Panc1 (cell line): ENCODE measurements at regions of chr13 and their contacts with region 1.

Region 1: GRCh38 chr13:100382785-100383184 is 205.8 kb downstream of the GGACT start:
- DNase-seq: no peak
- ATAC-seq: no peak
- H3K4me3 ChIP-seq: no peak overlapping the region
- H3K27ac ChIP-seq: peak overlapping the region; percentile 61; the same call in 1 of the 2 replicates
- H3K4me1 ChIP-seq: no peaks in the 10 kb centered on the region
- H3K27me3 ChIP-seq: no peaks in the 10 kb centered on the region
- CTCF ChIP-seq: no peak

Region 2: GRCh38 chr13:100399455-100399854 is 16.7 kb after region 1 on chr13:
- CTCF ChIA-PET with region 1: no interaction called
- POLR2A ChIA-PET with region 1: no interaction called
- in situ Hi-C with region 1: no loop called
- intact Hi-C with region 1: no loop called
- DNase-seq: no peak
- ATAC-seq: no peak
- H3K4me3 ChIP-seq: no peak overlapping the region
- H3K27ac ChIP-seq: peak overlapping the region; percentile 56; the same call in 1 of the 2 replicates
- H3K4me1 ChIP-seq: peaks cover 37% of the 10 kb centered on the region
- H3K27me3 ChIP-seq: no peaks in the 10 kb centered on the region
- CTCF ChIP-seq: no peak

Region 3: GRCh38 chr13:100887729-100888156 is 505.0 kb after region 1 on chr13:
- CTCF ChIA-PET with region 1: no interaction called
- POLR2A ChIA-PET with region 1: no interaction called
- in situ Hi-C with region 1: no loop called
- intact Hi-C with region 1: loop called (anchors 10 kb)
- DNase-seq: no peak
- ATAC-seq: no peak
- H3K4me3 ChIP-seq: no peak overlapping the region
- H3K27ac ChIP-seq: no peak overlapping the region
- H3K4me1 ChIP-seq: no peaks in the 10 kb centered on the region
- H3K27me3 ChIP-seq: no peaks in the 10 kb centered on the region
- CTCF ChIP-seq: no peak